PC-3 (cell line): ENCODE measurements at regions of chr13 and their contacts with region 1.

Region 1: DNA sequence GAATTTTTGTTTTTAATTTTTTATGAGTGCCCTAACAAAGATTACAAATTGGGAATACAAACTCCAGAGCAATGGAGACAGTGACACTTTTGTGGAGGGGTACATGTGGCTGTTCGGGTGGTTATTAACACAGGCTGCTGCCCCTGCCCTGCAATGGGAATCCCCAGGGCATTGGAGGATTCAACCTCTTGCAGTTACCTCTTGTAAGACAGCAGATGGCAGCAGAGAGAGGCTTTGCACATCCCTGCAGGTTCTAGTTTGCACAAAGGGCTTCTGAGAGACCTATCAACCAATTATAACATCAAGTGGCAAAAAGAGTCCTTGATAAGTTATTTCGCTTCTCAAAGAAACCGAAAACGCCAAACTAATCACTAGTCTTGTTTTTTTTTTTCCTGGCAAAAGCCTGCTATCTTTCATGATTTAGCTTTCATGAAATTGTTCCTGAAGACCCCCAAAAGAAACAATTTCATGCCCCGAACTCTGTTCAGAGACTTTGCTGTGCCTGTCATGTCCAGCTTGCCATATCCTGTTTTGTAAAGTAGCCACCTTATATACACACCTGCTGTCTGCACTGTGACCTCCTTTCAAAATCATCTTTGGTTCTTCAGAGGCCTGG is 10.4 kb downstream of the GJB2 start:
- DNase-seq: peak; percentile 86
- ATAC-seq: peak; percentile 98
- H3K4me3 ChIP-seq: no peak overlapping the region
- H3K27ac ChIP-seq: no peak overlapping the region
- H3K4me1 ChIP-seq: no peaks in the 10 kb centered on the region
- H3K27me3 ChIP-seq: no peaks in the 10 kb centered on the region
- CTCF ChIP-seq: peak; percentile 91

Region 2: DNA sequence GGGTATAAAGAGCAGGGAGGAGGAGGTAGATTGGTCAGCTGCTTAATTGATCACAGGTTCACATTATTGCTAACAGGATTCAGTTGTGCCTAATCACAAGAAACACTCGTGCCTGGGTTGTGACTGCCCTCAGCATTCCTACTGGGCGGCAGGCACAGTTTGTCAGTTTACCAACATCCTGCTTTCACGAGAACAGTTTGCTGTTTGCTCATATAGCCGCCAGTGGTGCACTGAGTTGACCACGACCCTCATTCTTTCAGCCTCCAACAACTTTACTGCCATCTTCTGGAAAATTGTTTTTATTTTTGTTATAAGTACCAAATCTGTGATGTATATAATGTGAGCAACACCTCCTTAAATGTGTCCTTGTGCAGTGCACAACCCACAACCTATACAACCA is 368.5 kb after region 1 on chr13:
- CTCF ChIA-PET with region 1: no interaction called
- POLR2A ChIA-PET with region 1: no interaction called
- intact Hi-C with region 1: loop called (anchors 1 kb)
- DNase-seq: peak; percentile 19
- ATAC-seq: peak; percentile 43
- H3K4me3 ChIP-seq: no peak overlapping the region
- H3K27ac ChIP-seq: no peak overlapping the region
- H3K4me1 ChIP-seq: no peaks in the 10 kb centered on the region
- H3K27me3 ChIP-seq: no peaks in the 10 kb centered on the region
- CTCF ChIP-seq: 0 out of 2 replicates have a peak, but pooled peaks have one; percentile 26

Region 3: GRCh38 chr13:20924758-20925394 is 742.5 kb after region 1 on chr13:
- CTCF ChIA-PET with region 1: no interaction called
- POLR2A ChIA-PET with region 1: no interaction called
- intact Hi-C with region 1: loop called (anchors 10 kb)
- DNase-seq: peak; percentile 86
- ATAC-seq: peak; percentile 85
- H3K4me3 ChIP-seq: no peak overlapping the region
- H3K27ac ChIP-seq: no peak overlapping the region
- H3K4me1 ChIP-seq: no peaks in the 10 kb centered on the region
- H3K27me3 ChIP-seq: no peaks in the 10 kb centered on the region
- CTCF ChIP-seq: peak; percentile 97